Psoas muscle (tissue), 8 donors: ENCODE measurements at regions of chr17 and their contacts with region 1.

Region 1: DNA sequence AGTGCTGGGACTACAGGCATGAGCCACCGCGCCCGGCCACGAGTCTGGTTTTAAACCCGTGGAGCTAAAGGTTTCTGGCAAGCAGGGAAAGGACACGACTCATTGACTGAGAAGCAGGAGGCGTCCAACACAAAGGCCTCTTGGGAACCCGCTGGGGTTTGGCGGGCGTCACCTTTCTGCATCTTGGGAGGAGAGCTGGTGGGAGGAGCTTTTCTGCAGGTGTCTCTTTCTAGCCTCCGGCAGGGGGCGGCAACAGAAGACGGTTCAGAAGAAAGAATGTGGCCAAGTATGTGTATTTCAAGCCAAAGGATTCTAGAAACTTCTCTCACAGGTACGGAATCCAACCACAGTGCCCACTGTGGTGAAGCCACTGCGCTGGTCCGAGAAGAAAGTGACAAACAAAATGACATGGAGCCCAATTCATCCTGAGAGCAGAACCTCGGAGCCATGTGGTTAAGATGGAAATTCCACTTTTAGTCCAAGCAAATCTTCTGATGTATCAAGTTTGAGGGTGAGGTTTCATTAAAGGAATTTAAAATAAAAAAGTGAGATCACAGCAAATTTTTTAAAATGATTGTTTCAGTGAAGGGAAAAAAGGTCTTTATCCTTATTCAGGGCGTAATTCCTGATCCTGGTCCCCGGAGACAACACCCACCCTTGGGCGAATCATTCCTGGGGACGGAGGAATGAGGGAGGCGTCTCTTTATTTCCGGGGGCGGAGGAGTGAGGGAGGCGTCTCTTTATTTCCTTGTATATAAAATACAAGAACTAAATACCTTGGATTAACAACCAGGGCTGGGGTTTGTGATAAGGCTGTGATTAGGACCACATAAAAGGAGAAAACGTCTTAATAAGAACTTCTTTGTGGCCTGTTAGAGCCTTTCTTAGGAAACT is 97.6 kb downstream of the MRM3 start:
- DNase-seq: peak; percentile 78 to 86
- ATAC-seq: peak; percentile 28 to 67 (median 53)
- H3K4me3 ChIP-seq: no peak overlapping the region
- H3K27ac ChIP-seq: peak overlapping the region; percentile 79
- H3K4me1 ChIP-seq: peaks cover 46% of the 10 kb centered on the region
- H3K27me3 ChIP-seq: no peaks in the 10 kb centered on the region
- CTCF ChIP-seq: peak; percentile 67

Region 2: GRCh38 chr17:700504-701094 is 179.2 kb before region 1 on chr17:
- intact Hi-C with region 1: no loop called
- DNase-seq: no peak
- ATAC-seq: peak in 2 of 4 donors; percentile 53 to 71
- H3K4me3 ChIP-seq: no peak overlapping the region
- H3K27ac ChIP-seq: no peak overlapping the region
- H3K4me1 ChIP-seq: peaks cover 4% of the 10 kb centered on the region
- H3K27me3 ChIP-seq: no peaks in the 10 kb centered on the region
- CTCF ChIP-seq: peak; percentile 71

Region 3: DNA sequence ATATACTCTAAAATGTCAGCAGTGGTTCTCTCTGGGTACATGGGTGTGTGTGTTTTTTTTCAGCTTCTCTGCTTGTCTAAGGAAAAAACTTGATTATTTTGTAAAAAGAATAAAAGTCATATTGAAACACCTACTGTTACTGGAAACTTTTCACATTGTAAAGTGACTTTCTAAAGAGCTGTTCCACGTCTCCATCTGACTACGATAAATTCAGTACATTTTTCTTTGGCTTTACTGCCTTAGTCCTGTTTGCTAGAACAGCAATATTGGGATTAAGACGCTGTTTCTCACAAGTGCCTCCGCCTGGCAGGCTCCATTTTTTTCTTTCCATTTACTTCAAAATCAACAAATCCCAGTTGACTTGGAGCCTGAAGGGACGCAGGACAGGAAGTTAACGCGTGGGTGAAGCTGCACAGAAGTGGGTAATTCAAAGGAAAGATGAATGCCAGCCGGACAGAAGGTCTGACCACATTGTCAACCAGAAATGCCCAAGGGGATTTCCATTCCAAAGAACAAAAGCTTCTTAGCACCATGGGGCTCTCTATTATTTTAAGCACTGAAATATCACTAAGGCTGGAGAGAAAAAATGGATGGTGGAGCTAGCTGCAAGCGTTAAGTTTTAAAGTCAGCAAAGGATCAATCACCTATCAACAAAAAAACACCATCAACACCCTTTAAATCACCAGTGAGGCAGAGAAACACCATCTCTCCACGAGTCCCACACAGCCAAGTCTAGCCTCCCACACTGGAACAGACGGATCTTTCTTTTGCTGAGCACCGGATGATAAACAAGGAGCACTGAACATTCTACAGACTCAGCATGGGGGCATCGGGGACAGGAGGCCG is 106.1 kb before region 1 on chr17:
- intact Hi-C with region 1: no loop called
- DNase-seq: no peak
- ATAC-seq: no peak
- H3K4me3 ChIP-seq: no peak overlapping the region
- H3K27ac ChIP-seq: no peak overlapping the region
- H3K4me1 ChIP-seq: no peaks in the 10 kb centered on the region
- H3K27me3 ChIP-seq: no peaks in the 10 kb centered on the region
- CTCF ChIP-seq: no peak

Region 4: DNA sequence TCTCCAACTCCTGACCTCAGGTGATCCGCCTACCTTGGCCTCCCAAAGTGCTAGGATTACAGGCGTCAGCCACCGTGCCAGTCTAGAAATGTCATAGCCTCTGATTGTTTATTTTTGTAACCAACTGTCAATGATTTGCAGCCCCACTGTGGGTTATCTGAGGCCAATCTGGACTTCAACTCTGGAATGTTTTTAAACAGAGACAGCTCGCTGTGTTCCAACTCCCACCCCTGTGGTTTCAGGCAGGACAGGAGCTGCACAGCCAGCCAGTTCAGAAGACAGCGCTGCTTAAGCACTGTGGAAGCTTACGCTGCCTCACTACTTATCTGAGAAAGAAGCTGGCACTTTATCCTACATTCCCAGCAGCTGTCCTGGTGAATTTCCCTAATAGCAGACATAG is 78.1 kb before region 1 on chr17:
- intact Hi-C with region 1: loop called (anchors 5 to 10 kb)
- DNase-seq: peak in 1 of 2 donors; percentile 50
- ATAC-seq: peak; percentile 69 to 78 (median 74)
- H3K4me3 ChIP-seq: no peak overlapping the region
- H3K27ac ChIP-seq: peak overlapping the region; percentile 46
- H3K4me1 ChIP-seq: peaks cover 37% of the 10 kb centered on the region
- H3K27me3 ChIP-seq: no peaks in the 10 kb centered on the region
- CTCF ChIP-seq: no peak

Region 5: DNA sequence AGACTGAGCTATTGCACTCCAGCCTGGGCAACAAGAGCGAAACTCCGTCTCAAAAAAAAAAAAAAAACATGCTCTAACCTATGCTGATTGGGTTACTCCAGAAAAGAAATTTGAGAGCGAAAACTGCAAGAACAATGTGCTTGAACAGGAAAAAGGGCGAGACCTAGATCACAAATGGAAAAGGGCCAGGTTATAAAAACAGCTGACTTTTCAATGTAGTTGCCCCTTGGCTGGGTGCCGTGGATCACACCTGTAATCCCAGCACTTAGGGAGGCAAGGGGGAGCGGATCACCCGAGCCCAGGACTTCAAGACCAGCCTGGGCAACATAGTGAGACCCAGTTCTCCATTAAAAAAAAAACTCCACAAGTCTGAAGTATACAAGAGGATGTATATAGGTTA is 48.8 kb before region 1 on chr17:
- intact Hi-C with region 1: loop called in 1 of 2 experiments (anchors 5 kb)
- DNase-seq: no peak
- ATAC-seq: no peak
- H3K4me3 ChIP-seq: no peak overlapping the region
- H3K27ac ChIP-seq: peak overlapping the region; percentile 66
- H3K4me1 ChIP-seq: peaks cover 17% of the 10 kb centered on the region
- H3K27me3 ChIP-seq: no peaks in the 10 kb centered on the region
- CTCF ChIP-seq: no peak

Region 6: DNA sequence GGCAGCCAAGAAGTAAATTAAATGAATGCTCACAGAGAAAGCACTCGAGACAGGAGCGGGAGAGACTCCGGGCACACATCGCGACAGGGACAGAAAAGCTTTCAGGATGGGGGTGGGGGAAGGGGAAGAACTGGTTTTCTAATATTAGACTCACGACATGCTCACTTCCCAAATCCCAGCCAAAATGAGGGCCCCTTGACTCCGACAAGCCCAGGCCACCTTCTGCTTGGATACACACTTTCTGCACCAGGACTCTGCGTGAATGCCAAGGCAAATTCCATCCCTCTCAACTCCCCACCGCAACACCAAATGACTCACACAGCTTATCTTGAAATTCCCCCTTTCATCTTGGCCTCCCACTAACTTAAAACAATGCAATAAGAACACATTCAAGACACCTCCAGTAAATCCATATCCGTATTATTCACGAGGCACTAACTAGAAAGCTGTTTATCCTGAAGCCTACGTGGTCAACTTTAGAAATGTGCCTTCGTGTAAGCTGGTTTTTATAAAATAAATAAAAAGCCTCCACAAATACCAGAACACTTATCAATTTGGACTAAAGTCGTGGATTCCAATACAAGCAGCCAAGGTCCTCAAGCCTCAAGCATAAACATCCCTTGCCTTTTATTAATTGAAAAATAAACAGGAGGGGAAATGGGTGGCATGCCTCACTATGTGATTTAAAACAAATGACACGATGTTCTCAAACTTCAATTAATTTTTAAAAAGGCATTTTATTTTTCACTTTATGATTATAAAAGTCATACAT is 53.7 kb after region 1 on chr17:
- intact Hi-C with region 1: no loop called
- DNase-seq: peak in 1 of 2 donors; percentile 53
- ATAC-seq: peak; percentile 75 to 89 (median 85)
- H3K4me3 ChIP-seq: peak overlapping the region; percentile 22
- H3K27ac ChIP-seq: peak overlapping the region; percentile 81
- H3K4me1 ChIP-seq: peaks cover 38% of the 10 kb centered on the region
- H3K27me3 ChIP-seq: no peaks in the 10 kb centered on the region
- CTCF ChIP-seq: no peak

Region 7: GRCh38 chr17:979538-980405 is 100.0 kb after region 1 on chr17 and contains the start of gene NXN:
- intact Hi-C with region 1: loop called in 1 of 2 experiments (anchors 5 kb)
- DNase-seq: peak; percentile 87 to 95
- ATAC-seq: peak; percentile 83 to 95 (median 92)
- H3K4me3 ChIP-seq: peak within 1 kb of the TSS; percentile 87
- H3K27ac ChIP-seq: peak within 1 kb of the TSS; percentile 86
- H3K4me1 ChIP-seq: peaks cover 41% of the 10 kb centered on the region
- H3K27me3 ChIP-seq: no peaks in the 10 kb centered on the region
- CTCF ChIP-seq: peak; percentile 33
- total RNA-seq, gene NXN: 72.8 to 79.4 (median 74.1) TPM